ENCODE measurements at regions of chr6 and their contacts with region 1.

Region 1: DNA sequence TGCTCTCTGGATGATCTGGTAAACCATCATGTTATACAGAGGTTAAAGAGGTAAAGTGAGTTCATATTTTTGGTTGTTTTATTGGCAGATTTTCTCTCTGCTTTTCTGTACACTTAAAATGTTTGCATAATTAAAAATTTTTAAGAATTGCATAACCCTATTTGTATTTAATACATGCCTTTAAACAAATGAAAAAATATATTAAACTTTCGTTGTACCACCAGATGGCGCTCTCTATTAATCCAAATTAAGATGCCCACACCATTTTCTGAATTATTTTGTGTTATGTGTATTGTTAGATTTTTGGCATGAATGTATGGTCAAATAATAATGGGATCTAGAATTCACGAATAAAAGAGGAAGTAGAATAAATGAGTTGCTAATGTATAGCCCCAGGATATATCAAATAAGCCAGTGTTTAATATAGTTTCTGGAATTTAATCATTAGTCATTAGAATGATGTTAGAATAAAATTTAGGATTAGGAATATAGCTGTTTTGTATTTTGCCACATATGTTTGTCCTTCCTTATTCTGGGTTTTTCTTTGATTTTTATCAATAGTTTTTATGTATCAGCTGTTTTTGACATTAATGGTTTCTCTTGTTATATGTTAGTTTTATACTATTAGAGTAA is 38.9 kb downstream of the SMAP1 start:
- DNase-seq: no peak
- ATAC-seq: peak; percentile 43
- H3K4me3 ChIP-seq: no peak overlapping the region
- H3K27ac ChIP-seq: no peak overlapping the region
- H3K4me1 ChIP-seq: peaks cover 6% of the 10 kb centered on the region; the same call in 1 of the 2 replicates
- H3K27me3 ChIP-seq: no peaks in the 10 kb centered on the region
- CTCF ChIP-seq: peak; percentile 13 to 55 (median 44); a peak in 4 of 6 replicates
- EP300 ChIP-seq: no peak
- POLR2A ChIP-seq: no peak
- RAD21 ChIP-seq: peak; percentile 74

Region 2: GRCh38 chr6:69907981-69908498 is 798.6 kb before region 1 on chr6:
- CTCF ChIA-PET with region 1: no interaction called
- POLR2A ChIA-PET with region 1: no interaction called
- RAD21 ChIA-PET with region 1: no interaction called
- SMC1A ChIA-PET with region 1: no interaction called
- in situ Hi-C with region 1: no loop called
- intact Hi-C with region 1: no loop called
- DNase-seq: no peak
- ATAC-seq: no peak
- H3K4me3 ChIP-seq: no peak overlapping the region
- H3K27ac ChIP-seq: no peak overlapping the region
- H3K4me1 ChIP-seq: no peaks in the 10 kb centered on the region
- H3K27me3 ChIP-seq: no peaks in the 10 kb centered on the region
- CTCF ChIP-seq: no peak
- EP300 ChIP-seq: no peak
- POLR2A ChIP-seq: no peak
- RAD21 ChIP-seq: no peak

Region 3: DNA sequence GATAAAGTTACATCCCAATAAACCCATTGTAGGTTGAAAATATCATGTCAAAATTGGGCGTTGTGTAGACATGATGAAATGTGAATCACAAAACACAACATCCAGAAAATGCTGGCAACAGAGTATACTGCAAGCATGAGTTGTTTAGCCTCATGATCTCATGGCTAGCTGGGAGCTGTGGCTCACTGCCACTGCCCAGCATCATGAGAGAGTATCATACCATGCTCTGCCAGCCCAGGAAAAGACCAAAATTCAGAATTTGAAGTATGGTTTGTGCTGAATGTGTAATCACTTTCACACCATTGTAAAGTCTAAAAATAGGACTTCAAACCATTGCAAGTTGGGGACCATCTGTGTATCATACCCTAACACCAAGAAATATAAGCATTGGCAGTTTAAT is 84.1 kb before region 1 on chr6:
- CTCF ChIA-PET with region 1: no interaction called
- POLR2A ChIA-PET with region 1: no interaction called
- RAD21 ChIA-PET with region 1: no interaction called
- SMC1A ChIA-PET with region 1: no interaction called
- in situ Hi-C with region 1: no loop called
- intact Hi-C with region 1: no loop called
- DNase-seq: no peak
- ATAC-seq: no peak
- H3K4me3 ChIP-seq: no peak overlapping the region
- H3K27ac ChIP-seq: no peak overlapping the region
- H3K4me1 ChIP-seq: no peaks in the 10 kb centered on the region
- H3K27me3 ChIP-seq: no peaks in the 10 kb centered on the region; a peak in 1 of 4 replicates
- CTCF ChIP-seq: no peak
- EP300 ChIP-seq: no peak
- POLR2A ChIP-seq: no peak
- RAD21 ChIP-seq: no peak

Region 4: DNA sequence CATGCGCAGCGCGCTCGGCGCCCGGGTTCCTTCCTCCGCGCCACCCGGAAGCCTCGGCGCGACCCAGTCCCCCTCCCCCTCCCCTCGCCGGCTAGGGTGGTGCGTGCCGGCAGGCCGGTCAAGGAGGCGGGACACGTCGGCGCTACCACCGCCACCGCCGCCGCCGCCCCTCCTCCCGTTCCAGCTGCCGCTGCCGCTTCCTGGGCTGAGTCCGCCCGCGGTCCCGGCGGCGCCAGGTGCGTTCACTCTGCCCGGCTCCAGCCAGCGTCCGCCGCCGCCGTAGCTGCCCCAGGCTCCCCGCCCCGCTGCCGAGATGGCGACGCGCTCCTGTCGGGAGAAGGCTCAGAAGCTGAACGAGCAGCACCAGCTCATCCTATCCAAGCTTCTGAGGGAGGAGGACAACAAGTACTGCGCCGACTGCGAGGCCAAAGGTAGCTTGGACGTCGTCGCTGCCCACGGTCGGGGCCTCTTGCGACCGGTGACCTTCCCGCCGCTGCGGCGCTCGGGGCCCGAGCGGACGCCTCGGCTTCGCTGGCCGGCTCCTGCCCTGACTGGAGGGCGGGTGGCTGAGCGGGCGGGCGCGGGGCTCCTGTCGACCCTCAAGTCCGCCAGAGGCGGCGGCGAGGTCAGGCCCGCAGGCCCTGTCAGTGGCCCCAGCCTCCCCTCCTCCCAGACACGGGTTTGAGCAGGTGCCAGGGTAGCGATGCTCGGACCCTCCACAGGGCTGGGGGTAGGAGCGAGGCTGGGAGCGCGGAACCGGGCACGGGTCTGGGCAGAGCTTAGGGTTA is 38.7 kb before region 1 on chr6 and contains the start of gene SMAP1:
- CTCF ChIA-PET with region 1: interaction called, 15 read pairs
- POLR2A ChIA-PET with region 1: interaction called, 6 read pairs
- RAD21 ChIA-PET with region 1: interaction called, 5 read pairs
- SMC1A ChIA-PET with region 1: interaction called, 3 read pairs
- in situ Hi-C with region 1: no loop called
- intact Hi-C with region 1: no loop called
- DNase-seq: peak; percentile 72
- ATAC-seq: peak; percentile 93
- H3K4me3 ChIP-seq: peak within 1 kb of the TSS; percentile 94
- H3K27ac ChIP-seq: peak within 1 kb of the TSS; percentile 81
- H3K4me1 ChIP-seq: peaks cover 4% of the 10 kb centered on the region; the same call in 1 of the 2 replicates
- H3K27me3 ChIP-seq: no peaks in the 10 kb centered on the region
- CTCF ChIP-seq: no peak
- EP300 ChIP-seq: peak in 1 of 2 experiments; percentile 15; a peak in 2 of 4 replicates
- POLR2A ChIP-seq: peak; percentile 95
- RAD21 ChIP-seq: no peak
- polyA plus RNA-seq, gene SMAP1: 13.7 to 15.1 TPM

Region 5: DNA sequence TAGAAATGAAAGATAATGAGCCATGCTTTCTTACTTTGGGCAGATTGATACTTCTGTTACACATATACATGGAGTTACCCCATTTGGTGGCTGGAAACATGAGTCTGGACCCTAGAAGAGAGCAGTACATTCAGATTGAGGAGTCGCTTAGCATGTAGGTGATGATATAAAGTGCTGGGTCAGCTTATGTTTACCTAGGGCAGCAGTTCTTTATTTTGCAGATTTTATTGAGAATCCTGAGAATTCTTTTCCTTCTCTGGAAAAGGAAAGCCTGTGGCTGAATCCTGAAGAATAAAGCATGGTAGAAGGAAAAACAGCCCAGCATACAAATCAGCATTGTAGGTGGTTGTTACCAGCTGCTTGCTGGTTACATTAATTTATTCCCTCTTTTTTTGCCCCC is 52.3 kb after region 1 on chr6:
- CTCF ChIA-PET with region 1: interaction called, 6 read pairs
- POLR2A ChIA-PET with region 1: no interaction called
- RAD21 ChIA-PET with region 1: no interaction called
- SMC1A ChIA-PET with region 1: interaction called, 10 read pairs
- in situ Hi-C with region 1: no loop called
- intact Hi-C with region 1: no loop called
- DNase-seq: no peak
- ATAC-seq: no peak
- H3K4me3 ChIP-seq: no peak overlapping the region
- H3K27ac ChIP-seq: no peak overlapping the region
- H3K4me1 ChIP-seq: no peaks in the 10 kb centered on the region
- H3K27me3 ChIP-seq: no peaks in the 10 kb centered on the region
- CTCF ChIP-seq: no peak
- EP300 ChIP-seq: no peak
- POLR2A ChIP-seq: no peak
- RAD21 ChIP-seq: no peak

Region 6: DNA sequence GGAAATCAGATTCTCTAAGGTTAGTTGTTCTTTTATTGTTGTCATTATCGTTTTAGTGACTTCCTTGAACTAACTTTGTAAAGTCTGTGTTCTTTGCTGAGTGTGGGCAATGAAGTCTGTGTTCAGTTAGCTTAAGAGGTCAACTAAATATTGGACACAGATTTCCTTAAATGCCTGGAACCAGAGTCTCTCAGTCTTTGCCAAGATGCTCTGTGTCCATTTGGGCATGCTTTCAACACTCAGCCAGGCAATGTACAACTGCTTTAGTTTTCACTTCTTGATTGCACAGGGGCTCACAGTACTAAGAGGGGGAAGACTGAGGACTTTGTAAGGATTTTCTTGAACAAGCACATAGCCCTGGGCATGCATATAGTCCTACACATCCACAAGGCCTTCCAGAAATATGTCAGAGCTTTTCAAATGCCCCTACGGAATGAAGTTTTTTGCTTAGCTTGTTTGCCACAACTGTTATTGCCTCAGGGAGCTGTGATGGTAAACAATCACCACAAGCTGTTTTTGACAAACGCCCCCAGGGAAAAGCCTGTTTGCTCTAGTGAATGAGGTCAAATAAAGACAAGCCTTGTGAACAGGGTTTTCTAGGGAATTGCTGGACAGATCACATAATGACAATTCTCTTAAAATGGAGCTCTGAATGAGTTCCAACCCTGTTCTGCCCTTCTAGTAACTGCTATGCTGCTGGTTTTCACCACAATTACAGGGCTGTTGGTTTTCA is 167.7 kb after region 1 on chr6:
- CTCF ChIA-PET with region 1: interaction called, 53 read pairs
- POLR2A ChIA-PET with region 1: no interaction called
- RAD21 ChIA-PET with region 1: interaction called, 3 read pairs
- SMC1A ChIA-PET with region 1: interaction called, 19 read pairs
- in situ Hi-C with region 1: no loop called
- intact Hi-C with region 1: no loop called
- DNase-seq: no peak
- ATAC-seq: no peak
- H3K4me3 ChIP-seq: no peak overlapping the region
- H3K27ac ChIP-seq: no peak overlapping the region
- H3K4me1 ChIP-seq: no peaks in the 10 kb centered on the region
- H3K27me3 ChIP-seq: no peaks in the 10 kb centered on the region
- CTCF ChIP-seq: no peak
- EP300 ChIP-seq: no peak
- POLR2A ChIP-seq: no peak
- RAD21 ChIP-seq: no peak

Region 7: GRCh38 chr6:70894001-70894400 is 187.4 kb after region 1 on chr6:
- CTCF ChIA-PET with region 1: interaction called, 225 read pairs
- POLR2A ChIA-PET with region 1: no interaction called
- RAD21 ChIA-PET with region 1: interaction called, 3 read pairs
- SMC1A ChIA-PET with region 1: interaction called, 4 read pairs
- in situ Hi-C with region 1: loop called (anchors 5 kb)
- intact Hi-C with region 1: no loop called
- DNase-seq: no peak
- ATAC-seq: no peak
- H3K4me3 ChIP-seq: no peak overlapping the region
- H3K27ac ChIP-seq: no peak overlapping the region
- H3K4me1 ChIP-seq: no peaks in the 10 kb centered on the region
- H3K27me3 ChIP-seq: no peaks in the 10 kb centered on the region; a peak in 2 of 4 replicates
- CTCF ChIP-seq: no peak
- EP300 ChIP-seq: no peak
- POLR2A ChIP-seq: no peak
- RAD21 ChIP-seq: no peak

Region 8: GRCh38 chr6:71012866-71013469 is 306.4 kb after region 1 on chr6:
- CTCF ChIA-PET with region 1: interaction called, 21 read pairs
- POLR2A ChIA-PET with region 1: no interaction called
- RAD21 ChIA-PET with region 1: interaction called, 4 read pairs
- SMC1A ChIA-PET with region 1: interaction called, 5 read pairs
- in situ Hi-C with region 1: no loop called
- intact Hi-C with region 1: loop called (anchors 1 kb)
- DNase-seq: peak; percentile 12
- ATAC-seq: peak; percentile 97
- H3K4me3 ChIP-seq: no peak overlapping the region
- H3K27ac ChIP-seq: no peak overlapping the region
- H3K4me1 ChIP-seq: no peaks in the 10 kb centered on the region
- H3K27me3 ChIP-seq: no peaks in the 10 kb centered on the region; a peak in 1 of 4 replicates
- CTCF ChIP-seq: peak; percentile 76 to 83 (median 80)
- EP300 ChIP-seq: no peak
- POLR2A ChIP-seq: no peak
- RAD21 ChIP-seq: peak; percentile 90